PC-9 (cell line): ENCODE measurements at regions of chr6 and their contacts with region 1.

Region 1: GRCh38 chr6:142857233-142857761 is 87.7 kb downstream of the HIVEP2 start:
- DNase-seq: no peak
- H3K4me3 ChIP-seq: no peak overlapping the region
- H3K27ac ChIP-seq: no peak overlapping the region
- H3K4me1 ChIP-seq: peaks cover 34% of the 10 kb centered on the region
- H3K27me3 ChIP-seq: no peaks in the 10 kb centered on the region
- CTCF ChIP-seq: no peak

Region 2: GRCh38 chr6:142845624-142846458 is 11.5 kb before region 1 on chr6:
- CTCF ChIA-PET with region 1: no interaction called
- POLR2A ChIA-PET with region 1: interaction called, 3 read pairs
- intact Hi-C with region 1: loop called (anchors 1 kb)
- DNase-seq: peak; percentile 86
- H3K4me3 ChIP-seq: peak overlapping the region; percentile 51; the same call in 1 of the 2 replicates
- H3K27ac ChIP-seq: peak overlapping the region; percentile 89
- H3K4me1 ChIP-seq: peaks cover 84% of the 10 kb centered on the region
- H3K27me3 ChIP-seq: no peaks in the 10 kb centered on the region
- CTCF ChIP-seq: no peak

Region 3: DNA sequence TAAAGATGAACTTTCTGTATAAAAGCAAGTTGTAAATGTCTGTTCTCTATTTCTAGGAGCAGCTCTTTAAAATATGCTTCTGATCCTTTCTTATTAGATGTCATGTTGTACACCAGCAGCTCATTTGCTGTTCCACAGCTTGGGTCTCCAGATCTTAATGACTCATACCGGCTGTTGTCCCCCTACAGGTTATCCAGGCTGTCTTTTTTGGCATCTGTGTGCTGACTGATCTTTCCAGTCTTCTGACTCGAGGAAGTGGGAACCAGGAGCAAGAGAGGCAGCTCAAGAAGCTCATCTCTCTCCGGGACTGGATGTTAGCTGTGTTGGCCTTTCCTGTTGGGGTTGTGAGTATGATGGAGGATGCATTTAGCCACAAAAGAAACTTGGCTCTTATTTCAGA is 279.4 kb after region 1 on chr6:
- CTCF ChIA-PET with region 1: no interaction called
- POLR2A ChIA-PET with region 1: interaction called, 13 read pairs
- intact Hi-C with region 1: no loop called
- DNase-seq: no peak
- H3K4me3 ChIP-seq: no peak overlapping the region
- H3K27ac ChIP-seq: no peak overlapping the region
- H3K4me1 ChIP-seq: no peaks in the 10 kb centered on the region
- H3K27me3 ChIP-seq: no peaks in the 10 kb centered on the region
- CTCF ChIP-seq: no peak